Breast epithelium (tissue), 4 donors: ENCODE measurements at regions of chr3 and their contacts with region 1.

Region 1: GRCh38 chr3:96070669-96071068 is 743.7 kb upstream of the EPHA6 start:
- DNase-seq: no peak
- H3K4me3 ChIP-seq: no peak overlapping the region
- H3K27ac ChIP-seq: no peak overlapping the region
- H3K4me1 ChIP-seq: no peaks in the 10 kb centered on the region
- H3K27me3 ChIP-seq: no peaks in the 10 kb centered on the region
- CTCF ChIP-seq: no peak
- POLR2A ChIP-seq: no peak

Region 2: DNA sequence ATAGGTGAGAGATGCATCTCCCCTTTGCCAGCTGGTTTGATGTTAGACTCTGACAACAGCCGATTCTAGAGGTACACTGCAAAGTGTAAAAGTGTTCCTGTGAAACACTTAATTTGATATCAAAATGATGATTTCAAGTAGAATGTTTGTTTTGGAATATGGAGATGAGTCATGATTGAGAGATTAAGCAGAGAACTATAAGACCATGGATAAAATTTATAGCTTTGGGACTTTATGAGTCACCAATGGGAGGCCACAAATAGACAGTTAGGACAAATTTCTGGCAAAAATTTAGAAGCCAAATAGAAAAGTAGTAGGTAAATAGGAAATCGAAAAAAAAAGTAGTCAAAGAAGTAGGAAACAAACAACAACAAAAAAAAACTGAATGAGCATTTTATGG is 1335.3 kb before region 1 on chr3:
- intact Hi-C with region 1: loop called (anchors 10 kb)
- DNase-seq: no peak
- H3K4me3 ChIP-seq: no peak overlapping the region
- H3K27ac ChIP-seq: no peak overlapping the region
- H3K4me1 ChIP-seq: no peaks in the 10 kb centered on the region
- H3K27me3 ChIP-seq: no peaks in the 10 kb centered on the region
- CTCF ChIP-seq: no peak
- POLR2A ChIP-seq: no peak

Region 3: GRCh38 chr3:95923496-95924210 is 147.0 kb before region 1 on chr3:
- intact Hi-C with region 1: no loop called
- DNase-seq: no peak
- H3K4me3 ChIP-seq: no peak overlapping the region
- H3K27ac ChIP-seq: no peak overlapping the region
- H3K4me1 ChIP-seq: no peaks in the 10 kb centered on the region
- H3K27me3 ChIP-seq: no peaks in the 10 kb centered on the region
- CTCF ChIP-seq: no peak
- POLR2A ChIP-seq: no peak